PC-3 (cell line): ENCODE measurements at regions of chr6 and their contacts with region 1.

Region 1: DNA sequence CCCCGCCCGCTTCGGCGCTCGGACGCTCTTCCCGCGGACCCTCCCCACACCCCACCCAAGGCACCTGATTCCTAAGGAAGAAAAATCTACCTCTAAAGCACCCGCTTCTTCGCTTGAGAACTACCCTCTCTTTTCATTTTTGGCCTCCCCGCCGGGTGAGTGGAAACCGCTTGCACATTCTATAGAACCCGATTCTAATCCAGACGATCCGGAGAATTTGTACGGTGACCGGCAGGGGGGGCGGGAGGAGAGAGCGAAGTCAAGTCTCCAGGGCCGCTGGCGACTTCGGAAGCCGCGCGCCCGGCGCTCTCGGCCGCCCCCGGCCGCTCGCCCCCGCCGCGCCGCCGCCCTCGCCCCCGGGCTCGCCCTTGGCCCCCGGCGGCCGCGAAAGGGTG is at the start of gene RBM24:
- DNase-seq: peak; percentile 78
- ATAC-seq: peak; percentile 65
- H3K4me3 ChIP-seq: peak within 1 kb of the TSS; percentile 88
- H3K27ac ChIP-seq: no peak within 1 kb of the TSS
- H3K4me1 ChIP-seq: peaks cover 32% of the 10 kb centered on the region
- H3K27me3 ChIP-seq: no peaks in the 10 kb centered on the region
- CTCF ChIP-seq: peak; percentile 36; the same call in 1 of the 2 replicates
- total RNA-seq, gene RBM24: 2.0 and 3.2 TPM in 2 replicates

Region 2: GRCh38 chr6:17167327-17167979 is 113.6 kb before region 1 on chr6:
- CTCF ChIA-PET with region 1: no interaction called
- POLR2A ChIA-PET with region 1: no interaction called
- intact Hi-C with region 1: loop called (anchors 5 kb)
- DNase-seq: peak; percentile 80
- ATAC-seq: peak; percentile 100
- H3K4me3 ChIP-seq: peak overlapping the region; percentile 48
- H3K27ac ChIP-seq: no peak overlapping the region
- H3K4me1 ChIP-seq: no peaks in the 10 kb centered on the region
- H3K27me3 ChIP-seq: no peaks in the 10 kb centered on the region
- CTCF ChIP-seq: peak; percentile 78

Region 3: GRCh38 chr6:17365977-17366376 is 84.9 kb after region 1 on chr6:
- CTCF ChIA-PET with region 1: no interaction called
- POLR2A ChIA-PET with region 1: no interaction called
- intact Hi-C with region 1: loop called (anchors 1 kb)
- DNase-seq: peak; percentile 74
- ATAC-seq: peak; percentile 90
- H3K4me3 ChIP-seq: no peak overlapping the region
- H3K27ac ChIP-seq: peak overlapping the region; percentile 15; the same call in 1 of the 2 replicates
- H3K4me1 ChIP-seq: peaks cover 8% of the 10 kb centered on the region
- H3K27me3 ChIP-seq: no peaks in the 10 kb centered on the region
- CTCF ChIP-seq: no peak

Region 4: DNA sequence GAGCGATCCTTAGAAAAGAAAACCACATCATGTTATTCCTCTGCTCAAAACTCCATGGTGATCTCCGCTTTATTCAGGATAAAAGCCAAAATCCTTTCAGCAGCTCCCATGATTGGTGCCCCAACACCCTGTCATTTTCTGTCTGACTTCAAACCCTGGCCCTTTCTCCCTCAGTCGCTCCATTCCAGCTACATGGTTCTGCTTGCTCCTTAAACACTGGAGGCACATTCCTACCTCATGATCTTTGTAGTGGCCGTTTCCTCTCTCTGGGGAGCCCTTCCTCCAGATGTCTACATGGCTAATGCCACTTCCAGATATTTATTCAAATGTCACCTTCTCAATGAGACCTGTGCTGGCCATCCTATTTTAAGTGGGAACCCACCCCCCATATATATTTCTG is 213.1 kb after region 1 on chr6:
- CTCF ChIA-PET with region 1: no interaction called
- POLR2A ChIA-PET with region 1: no interaction called
- intact Hi-C with region 1: no loop called
- DNase-seq: no peak
- ATAC-seq: no peak
- H3K4me3 ChIP-seq: no peak overlapping the region
- H3K27ac ChIP-seq: no peak overlapping the region
- H3K4me1 ChIP-seq: no peaks in the 10 kb centered on the region
- H3K27me3 ChIP-seq: no peaks in the 10 kb centered on the region
- CTCF ChIP-seq: no peak

Region 5: DNA sequence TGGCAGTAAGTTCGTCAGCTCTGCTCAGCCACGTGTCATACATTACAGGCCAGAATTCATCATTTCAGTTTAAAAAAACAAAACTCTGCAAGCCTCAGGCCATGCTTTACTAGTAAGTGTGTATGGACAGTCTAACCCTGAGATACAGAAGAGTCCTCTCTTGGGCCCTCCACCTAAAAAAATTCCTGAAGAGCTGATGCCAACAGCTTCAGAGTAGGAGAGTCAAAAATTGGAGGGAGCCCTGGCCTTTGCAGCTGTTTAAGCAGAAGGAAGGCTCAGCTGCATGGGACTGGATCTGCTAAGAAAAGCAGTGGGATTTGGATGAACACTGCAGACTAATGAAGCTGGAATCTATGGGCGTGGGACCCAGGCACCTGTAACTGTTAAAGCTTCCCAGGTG is 271.8 kb after region 1 on chr6:
- CTCF ChIA-PET with region 1: no interaction called
- POLR2A ChIA-PET with region 1: interaction called, 11 read pairs
- intact Hi-C with region 1: no loop called
- DNase-seq: no peak
- ATAC-seq: no peak
- H3K4me3 ChIP-seq: no peak overlapping the region
- H3K27ac ChIP-seq: no peak overlapping the region
- H3K4me1 ChIP-seq: no peaks in the 10 kb centered on the region
- H3K27me3 ChIP-seq: no peaks in the 10 kb centered on the region
- CTCF ChIP-seq: no peak